A673 (cell line): ENCODE measurements at regions of chrX and their contacts with region 1.

Region 1: DNA sequence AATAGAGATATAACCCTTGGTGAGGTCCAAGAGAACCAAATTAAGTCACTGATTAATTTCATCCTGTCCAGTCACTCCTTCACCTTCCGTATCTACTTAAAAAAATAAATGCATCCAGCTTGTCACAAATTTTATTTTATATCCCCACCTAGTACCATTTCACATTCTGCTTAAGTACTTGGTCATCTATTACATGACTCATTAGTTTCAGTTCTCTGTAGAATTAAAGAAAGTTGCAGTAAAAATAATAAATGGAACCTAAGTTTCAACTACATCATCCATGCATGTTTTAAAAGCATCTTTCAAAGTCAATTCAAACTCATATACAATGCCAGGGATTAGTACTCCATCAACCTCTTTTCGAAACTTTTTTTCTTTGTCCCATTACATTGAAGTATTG is 130.2 kb downstream of the SH2D1A start:
- DNase-seq: no peak
- H3K4me3 ChIP-seq: no peak overlapping the region
- H3K27ac ChIP-seq: no peak overlapping the region
- H3K4me1 ChIP-seq: no peaks in the 10 kb centered on the region
- H3K27me3 ChIP-seq: no peaks in the 10 kb centered on the region
- CTCF ChIP-seq: no peak

Region 2: DNA sequence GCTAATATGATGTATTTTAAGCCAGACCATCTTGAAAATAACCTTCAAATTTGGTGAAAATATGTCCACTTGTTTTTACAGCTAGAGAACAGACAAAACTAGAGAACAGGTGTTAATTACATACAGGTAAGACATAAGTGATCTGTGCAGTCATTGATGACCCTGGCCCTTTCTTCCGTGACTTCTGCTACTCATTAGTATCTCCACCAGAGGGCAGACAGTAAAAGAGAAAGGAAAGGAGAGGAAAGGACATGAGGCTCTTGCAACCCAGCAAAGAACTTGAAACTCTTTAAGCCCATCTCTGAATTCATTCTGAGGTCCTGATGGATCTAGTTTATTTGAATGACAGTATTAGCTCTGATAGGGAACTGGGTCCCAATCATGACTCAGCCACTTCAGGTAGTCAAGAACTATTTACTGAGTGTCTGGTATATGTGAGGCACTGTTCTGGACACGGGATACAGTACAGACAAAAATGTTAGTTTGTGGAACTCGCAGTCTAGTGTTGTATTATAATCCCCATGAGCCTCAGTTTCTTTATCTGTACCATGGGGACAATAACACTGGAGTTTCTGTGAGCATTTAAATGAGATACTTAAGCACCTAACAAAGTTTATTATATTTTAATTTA is 265.1 kb before region 1 on chrX:
- CTCF ChIA-PET with region 1: no interaction called
- POLR2A ChIA-PET with region 1: no interaction called
- intact Hi-C with region 1: no loop called
- DNase-seq: peak; percentile 73
- H3K4me3 ChIP-seq: no peak overlapping the region
- H3K27ac ChIP-seq: no peak overlapping the region
- H3K4me1 ChIP-seq: peaks cover 31% of the 10 kb centered on the region
- H3K27me3 ChIP-seq: no peaks in the 10 kb centered on the region
- CTCF ChIP-seq: peak; percentile 70

Region 3: DNA sequence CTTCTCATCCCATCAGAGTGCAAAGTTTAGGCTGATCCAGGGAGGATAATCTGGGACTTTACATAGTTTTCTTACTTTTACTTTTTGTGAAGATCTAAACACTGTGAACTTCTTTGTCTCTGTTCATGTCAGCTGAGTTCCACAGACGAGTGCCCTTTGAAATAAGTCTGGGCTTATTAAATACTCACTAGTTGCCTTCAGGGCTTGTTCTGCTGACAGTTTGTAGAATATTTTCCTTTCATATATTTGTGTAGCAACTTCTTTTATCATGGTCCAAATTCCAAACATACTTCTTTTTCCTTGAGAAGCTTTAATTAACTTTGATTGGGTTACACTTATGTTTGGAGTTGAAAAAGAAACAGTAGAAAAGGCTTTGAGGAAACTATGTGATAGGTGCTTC is 20.6 kb before region 1 on chrX:
- CTCF ChIA-PET with region 1: interaction called, 10 read pairs
- POLR2A ChIA-PET with region 1: no interaction called
- intact Hi-C with region 1: no loop called
- DNase-seq: no peak
- H3K4me3 ChIP-seq: no peak overlapping the region
- H3K27ac ChIP-seq: no peak overlapping the region
- H3K4me1 ChIP-seq: no peaks in the 10 kb centered on the region
- H3K27me3 ChIP-seq: no peaks in the 10 kb centered on the region
- CTCF ChIP-seq: no peak

Region 4: DNA sequence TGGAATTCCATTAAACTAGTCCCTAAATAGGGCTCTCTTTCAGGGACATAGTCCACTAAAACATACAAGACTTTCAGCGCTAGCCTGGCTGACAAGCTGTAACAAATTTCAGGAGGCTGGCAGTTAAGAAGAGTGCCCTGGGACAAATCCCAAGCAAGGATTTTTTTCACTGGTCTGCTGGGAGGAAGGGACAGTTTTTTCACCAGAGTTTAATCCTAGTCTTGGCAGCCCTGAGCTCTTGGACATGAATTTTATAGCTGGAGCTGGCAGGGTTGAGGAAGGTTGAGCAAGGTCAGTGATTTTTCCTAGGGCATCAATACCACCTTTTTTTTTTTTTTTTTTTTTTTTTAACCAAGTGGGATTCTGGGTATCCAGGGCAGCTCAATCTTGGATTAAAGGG is 54.2 kb after region 1 on chrX:
- CTCF ChIA-PET with region 1: no interaction called
- POLR2A ChIA-PET with region 1: no interaction called
- intact Hi-C with region 1: loop called (anchors 10 kb)
- DNase-seq: no peak
- H3K4me3 ChIP-seq: no peak overlapping the region
- H3K27ac ChIP-seq: no peak overlapping the region
- H3K4me1 ChIP-seq: no peaks in the 10 kb centered on the region
- H3K27me3 ChIP-seq: no peaks in the 10 kb centered on the region
- CTCF ChIP-seq: no peak

Region 5: DNA sequence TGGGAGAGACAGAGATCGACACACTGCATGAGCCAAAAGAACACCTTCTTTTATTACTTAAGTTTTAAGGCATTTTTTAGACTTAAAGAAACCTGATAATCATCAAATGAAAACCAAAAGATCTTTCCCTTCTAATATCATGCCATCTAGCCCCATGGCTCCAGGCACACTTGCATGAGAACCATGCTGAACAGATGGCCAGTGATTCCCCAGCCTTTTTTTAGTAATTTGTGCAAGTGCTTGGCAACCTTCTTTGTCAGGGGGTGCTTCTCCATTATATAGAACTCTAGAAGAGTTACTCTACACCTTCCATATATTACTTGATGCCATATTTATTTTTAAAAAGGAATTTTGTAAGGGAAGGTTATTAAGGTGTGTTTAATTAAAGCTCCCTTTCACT is 661.0 kb after region 1 on chrX:
- CTCF ChIA-PET with region 1: no interaction called
- POLR2A ChIA-PET with region 1: no interaction called
- intact Hi-C with region 1: no loop called
- DNase-seq: no peak
- H3K4me3 ChIP-seq: no peak overlapping the region
- H3K27ac ChIP-seq: no peak overlapping the region
- H3K4me1 ChIP-seq: no peaks in the 10 kb centered on the region
- H3K27me3 ChIP-seq: no peaks in the 10 kb centered on the region
- CTCF ChIP-seq: no peak

Region 6: DNA sequence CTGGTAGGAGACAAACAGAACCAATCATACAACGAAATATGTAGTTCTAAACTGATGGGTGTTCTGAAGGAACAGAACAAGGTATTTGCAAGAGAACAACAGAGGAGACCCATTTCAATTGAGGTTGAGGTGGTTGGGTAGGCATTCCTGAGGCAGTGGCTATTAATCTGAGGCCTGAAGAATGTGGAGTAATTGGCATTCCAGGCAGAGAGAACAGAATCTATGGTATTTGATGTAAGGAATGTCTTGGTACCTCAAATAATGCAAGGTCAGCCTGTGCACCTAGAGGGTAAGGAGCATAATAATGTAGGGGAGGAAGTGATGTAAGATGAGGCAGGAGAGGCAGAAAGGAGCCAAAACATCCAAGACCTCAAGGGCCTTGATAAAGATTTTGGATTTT is 733.6 kb after region 1 on chrX:
- CTCF ChIA-PET with region 1: no interaction called
- POLR2A ChIA-PET with region 1: no interaction called
- intact Hi-C with region 1: no loop called
- DNase-seq: no peak
- H3K4me3 ChIP-seq: no peak overlapping the region
- H3K27ac ChIP-seq: no peak overlapping the region
- H3K4me1 ChIP-seq: peaks cover 16% of the 10 kb centered on the region
- H3K27me3 ChIP-seq: no peaks in the 10 kb centered on the region
- CTCF ChIP-seq: no peak